PC-3 (cell line): ENCODE measurements at regions of chr1 and their contacts with region 1.

Region 1: DNA sequence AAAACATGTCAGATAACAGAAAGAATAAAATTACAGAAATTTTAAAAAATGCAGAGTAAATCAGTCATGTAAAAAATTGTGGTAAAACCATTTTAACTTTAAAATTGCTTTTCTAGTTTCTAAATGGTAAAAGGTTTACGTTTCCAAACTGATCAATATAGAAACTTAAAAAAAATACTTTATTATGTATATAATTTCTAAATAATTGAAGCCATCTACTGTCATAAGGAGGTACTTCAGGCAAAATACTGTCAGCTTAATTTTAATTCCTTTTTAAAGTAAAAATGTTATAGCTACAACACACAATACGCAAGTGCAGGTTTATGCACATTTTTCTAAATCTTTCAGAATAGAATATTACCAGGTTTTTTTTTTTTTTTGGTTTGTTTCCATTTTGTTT is 159.9 kb downstream of the HFM1 start:
- DNase-seq: no peak
- ATAC-seq: no peak
- H3K4me3 ChIP-seq: no peak overlapping the region
- H3K27ac ChIP-seq: no peak overlapping the region
- H3K4me1 ChIP-seq: no peaks in the 10 kb centered on the region
- H3K27me3 ChIP-seq: peaks cover 11% of the 10 kb centered on the region
- CTCF ChIP-seq: peak; percentile 23; the same call in 1 of the 2 replicates

Region 2: GRCh38 chr1:90993245-90993644 is 251.5 kb before region 1 on chr1:
- CTCF ChIA-PET with region 1: no interaction called
- POLR2A ChIA-PET with region 1: no interaction called
- intact Hi-C with region 1: no loop called
- DNase-seq: no peak
- ATAC-seq: no peak
- H3K4me3 ChIP-seq: no peak overlapping the region
- H3K27ac ChIP-seq: no peak overlapping the region
- H3K4me1 ChIP-seq: no peaks in the 10 kb centered on the region
- H3K27me3 ChIP-seq: no peaks in the 10 kb centered on the region
- CTCF ChIP-seq: no peak

Region 3: DNA sequence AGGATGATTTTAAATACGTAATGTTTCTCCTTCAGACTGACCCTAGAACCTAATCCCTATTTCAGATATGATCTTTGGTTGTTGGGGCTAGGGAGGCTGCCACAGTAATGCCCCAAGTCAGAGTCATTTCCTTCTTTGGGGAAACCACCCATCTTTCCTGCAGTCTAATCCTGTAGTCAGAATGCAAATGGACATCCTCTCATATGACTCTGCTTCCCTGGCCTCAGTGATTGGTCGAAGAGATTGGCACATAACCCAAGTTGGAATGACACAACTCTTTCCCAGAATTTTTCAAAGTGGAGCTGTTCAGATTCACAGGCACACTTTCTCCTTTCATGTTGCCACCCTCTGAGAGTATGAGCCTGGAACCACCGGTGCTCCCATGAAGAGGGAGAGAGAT is 164.1 kb before region 1 on chr1:
- CTCF ChIA-PET with region 1: interaction called, 15 read pairs
- POLR2A ChIA-PET with region 1: no interaction called
- intact Hi-C with region 1: no loop called
- DNase-seq: peak; percentile 9
- ATAC-seq: no peak
- H3K4me3 ChIP-seq: no peak overlapping the region
- H3K27ac ChIP-seq: no peak overlapping the region
- H3K4me1 ChIP-seq: no peaks in the 10 kb centered on the region
- H3K27me3 ChIP-seq: peaks cover 3% of the 10 kb centered on the region; the same call in 1 of the 2 replicates
- CTCF ChIP-seq: no peak